HCT116 (cell line): ENCODE measurements at regions of chr3 and their contacts with region 1.

Region 1: GRCh38 chr3:186570096-186570940 is at the start of gene DNAJB11:
- DNase-seq: peak; percentile 100
- ATAC-seq: peak; percentile 86
- H3K4me3 ChIP-seq: peak within 1 kb of the TSS; percentile 87 to 94
- H3K27ac ChIP-seq: peak within 1 kb of the TSS; percentile 52
- H3K4me1 ChIP-seq: peaks cover 11 to 32% of the 10 kb centered on the region in 2 experiments
- H3K27me3 ChIP-seq: no peaks in the 10 kb centered on the region
- CTCF ChIP-seq: no peak
- POLR2A ChIP-seq: peak; percentile 86
- RAD21 ChIP-seq: no peak
- total RNA-seq, gene DNAJB11: 54.3 TPM

Region 2: GRCh38 chr3:186108941-186109865 is 461.1 kb before region 1 on chr3 and contains the start of gene ETV5:
- CTCF ChIA-PET with region 1: no interaction called
- POLR2A ChIA-PET with region 1: no interaction called
- RAD21 ChIA-PET with region 1: no interaction called
- intact Hi-C with region 1: loop called (anchors 2 kb)
- DNase-seq: peak; percentile 98
- ATAC-seq: peak; percentile 93
- H3K4me3 ChIP-seq: peak within 1 kb of the TSS; percentile 91 to 93
- H3K27ac ChIP-seq: peak within 1 kb of the TSS; percentile 66
- H3K4me1 ChIP-seq: peaks cover 34 to 39% of the 10 kb centered on the region in 2 experiments
- H3K27me3 ChIP-seq: no peaks in the 10 kb centered on the region
- CTCF ChIP-seq: no peak
- POLR2A ChIP-seq: peak; percentile 78
- RAD21 ChIP-seq: no peak
- total RNA-seq, gene ETV5: 89.7 TPM

Region 3: GRCh38 chr3:186754006-186754405 is 183.7 kb after region 1 on chr3:
- CTCF ChIA-PET with region 1: no interaction called
- POLR2A ChIA-PET with region 1: no interaction called
- RAD21 ChIA-PET with region 1: no interaction called
- intact Hi-C with region 1: loop called (anchors 5 kb)
- DNase-seq: no peak
- ATAC-seq: no peak
- H3K4me3 ChIP-seq: no peak overlapping the region
- H3K27ac ChIP-seq: no peak overlapping the region
- H3K4me1 ChIP-seq: peaks cover 0 to 25% of the 10 kb centered on the region in 2 experiments; a peak in 2 of 4 replicates
- H3K27me3 ChIP-seq: no peaks in the 10 kb centered on the region
- CTCF ChIP-seq: no peak
- POLR2A ChIP-seq: no peak
- RAD21 ChIP-seq: no peak

Region 4: DNA sequence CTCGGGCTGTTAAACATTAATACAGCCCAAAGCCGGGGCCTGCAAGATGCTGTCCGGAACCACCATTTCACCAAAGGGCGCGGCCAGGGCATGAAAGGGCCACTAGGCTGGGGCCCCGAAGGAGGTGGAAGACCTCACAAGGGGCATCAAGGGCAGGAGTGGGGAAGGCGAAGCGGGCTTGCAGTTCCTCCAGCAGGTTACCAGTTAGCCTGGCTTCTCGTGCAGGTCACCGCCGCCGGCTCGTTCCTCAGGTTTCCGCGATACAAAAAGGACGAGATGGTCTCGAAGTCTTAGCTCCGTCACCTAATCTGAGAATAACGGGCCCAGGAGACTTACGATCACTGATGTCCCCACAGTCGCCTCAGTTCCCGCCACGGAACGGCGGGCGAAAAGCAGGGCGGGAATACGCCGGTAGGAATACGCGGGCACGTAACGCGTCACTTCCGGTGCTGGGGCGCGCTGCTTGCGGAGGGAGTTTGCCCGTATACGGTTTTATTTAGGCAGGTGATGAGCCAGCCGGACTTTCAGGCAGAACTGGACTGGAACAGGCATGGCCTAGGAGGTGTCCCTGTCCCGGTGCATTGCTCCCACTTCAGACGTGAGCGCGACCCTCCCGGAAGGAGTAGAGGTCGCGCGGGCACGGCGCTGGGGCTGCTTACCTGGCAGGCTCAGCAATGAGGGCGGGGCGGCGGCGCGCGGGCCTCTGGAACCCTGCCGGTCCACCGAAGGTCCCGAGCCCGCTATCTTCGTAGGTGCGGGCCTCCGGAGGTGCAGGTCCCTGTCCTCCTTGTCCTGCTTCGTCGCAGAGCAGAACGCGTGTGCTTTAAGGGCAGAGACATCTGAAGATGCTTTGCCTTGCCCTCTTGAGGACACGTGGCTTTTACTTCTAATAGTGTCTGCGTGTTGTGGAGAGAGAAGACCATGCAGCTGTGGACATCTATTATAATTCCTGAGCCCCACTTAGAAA is 236.1 kb after region 1 on chr3 and contains the start of gene RFC4:
- CTCF ChIA-PET with region 1: no interaction called
- POLR2A ChIA-PET with region 1: no interaction called
- RAD21 ChIA-PET with region 1: no interaction called
- intact Hi-C with region 1: loop called (anchors 5 kb)
- DNase-seq: no peak
- ATAC-seq: peak; percentile 90
- H3K4me3 ChIP-seq: peak within 1 kb of the TSS; percentile 86 to 95
- H3K27ac ChIP-seq: peak within 1 kb of the TSS; percentile 89
- H3K4me1 ChIP-seq: peaks cover 11 to 21% of the 10 kb centered on the region in 2 experiments; a peak in 3 of 4 replicates
- H3K27me3 ChIP-seq: no peaks in the 10 kb centered on the region
- CTCF ChIP-seq: no peak
- POLR2A ChIP-seq: peak; percentile 88
- RAD21 ChIP-seq: no peak
- total RNA-seq, gene RFC4: 86.2 TPM

Region 5: GRCh38 chr3:187101184-187102072 is 531.1 kb after region 1 on chr3:
- CTCF ChIA-PET with region 1: no interaction called
- POLR2A ChIA-PET with region 1: no interaction called
- RAD21 ChIA-PET with region 1: no interaction called
- intact Hi-C with region 1: no loop called
- DNase-seq: no peak
- ATAC-seq: peak; percentile 63
- H3K4me3 ChIP-seq: peak overlapping the region in 1 of 2 experiments; percentile 25; a peak in 1 of 4 replicates
- H3K27ac ChIP-seq: no peak overlapping the region
- H3K4me1 ChIP-seq: peaks cover 6 to 8% of the 10 kb centered on the region in 2 experiments; a peak in 3 of 4 replicates
- H3K27me3 ChIP-seq: no peaks in the 10 kb centered on the region
- CTCF ChIP-seq: no peak
- POLR2A ChIP-seq: no peak
- RAD21 ChIP-seq: no peak